IMR-90 (cell line): ENCODE measurements at regions of chr6 and their contacts with region 1.

Region 1: GRCh38 chr6:146183831-146184230 is 155.0 kb downstream of the GRM1 start:
- DNase-seq: no peak
- ATAC-seq: no peak
- H3K4me3 ChIP-seq: no peak overlapping the region
- H3K27ac ChIP-seq: no peak overlapping the region
- H3K4me1 ChIP-seq: no peaks in the 10 kb centered on the region
- H3K27me3 ChIP-seq: no peaks in the 10 kb centered on the region
- CTCF ChIP-seq: no peak
- POLR2A ChIP-seq: no peak
- RAD21 ChIP-seq: no peak

Region 2: DNA sequence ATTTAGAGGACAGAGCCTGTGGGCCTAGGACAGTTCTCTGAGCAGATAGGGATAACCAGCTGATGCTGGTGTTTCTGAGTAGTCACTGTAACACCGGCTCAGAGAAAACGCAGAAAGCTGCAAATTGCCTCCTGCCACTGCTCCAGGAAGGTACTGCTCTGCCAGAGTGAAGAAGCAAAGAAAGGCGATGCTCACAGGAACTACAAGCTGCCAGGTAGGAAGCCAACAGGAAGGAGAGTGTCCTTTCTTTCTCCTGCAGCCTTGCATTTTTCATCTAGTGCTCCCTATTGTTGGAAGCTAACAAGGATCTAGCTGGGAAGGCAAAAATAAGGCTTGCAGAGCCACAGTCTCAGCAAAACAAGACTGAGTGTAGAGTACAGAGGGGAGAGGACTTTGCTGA is 289.1 kb after region 1 on chr6:
- CTCF ChIA-PET with region 1: no interaction called
- POLR2A ChIA-PET with region 1: no interaction called
- dilution Hi-C with region 1: no loop called
- in situ Hi-C with region 1: no loop called
- intact Hi-C with region 1: loop called (anchors 10 kb)
- DNase-seq: no peak
- ATAC-seq: no peak
- H3K4me3 ChIP-seq: no peak overlapping the region
- H3K27ac ChIP-seq: no peak overlapping the region
- H3K4me1 ChIP-seq: no peaks in the 10 kb centered on the region
- H3K27me3 ChIP-seq: no peaks in the 10 kb centered on the region
- CTCF ChIP-seq: no peak
- POLR2A ChIP-seq: no peak
- RAD21 ChIP-seq: no peak